ENCODE measurements at regions of chr16 and their contacts with region 1.

Region 1: DNA sequence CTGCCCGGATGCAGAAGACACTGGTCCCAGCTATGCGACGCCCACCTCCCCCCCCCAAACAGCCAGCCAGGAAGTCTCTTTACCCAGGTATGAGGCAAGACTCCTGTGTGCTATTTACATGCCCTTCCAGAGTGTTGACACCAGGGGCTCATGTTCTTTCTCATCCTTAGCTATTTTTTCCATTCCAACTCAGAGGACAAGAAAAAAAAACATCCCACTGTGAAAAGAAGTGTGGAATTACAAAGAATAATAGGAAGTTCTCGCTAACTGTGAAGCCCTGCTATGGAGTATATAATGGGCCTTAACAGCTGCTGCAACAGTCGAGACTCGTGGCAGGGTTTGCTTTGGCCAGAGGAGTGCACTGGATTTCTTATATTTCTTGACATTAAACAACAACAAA is 584.9 kb downstream of the CDH13 start:
- DNase-seq: no peak
- H3K4me3 ChIP-seq: no peak overlapping the region
- H3K27ac ChIP-seq: no peak overlapping the region
- H3K4me1 ChIP-seq: no peaks in the 10 kb centered on the region
- H3K27me3 ChIP-seq: no peaks in the 10 kb centered on the region

Region 2: GRCh38 chr16:83113317-83113716 is 98.4 kb before region 1 on chr16:
- CTCF ChIA-PET with region 1: interaction called, 10 read pairs
- POLR2A ChIA-PET with region 1: no interaction called
- DNase-seq: peak; percentile 50 to 58 (median 51)
- H3K4me3 ChIP-seq: no peak overlapping the region
- H3K27ac ChIP-seq: no peak overlapping the region
- H3K4me1 ChIP-seq: peaks cover 0 to 26% (median 0%) of the 10 kb centered on the region in 4 experiments
- H3K27me3 ChIP-seq: no peaks in the 10 kb centered on the region

Region 3: GRCh38 chr16:83441517-83441916 is 229.8 kb after region 1 on chr16:
- CTCF ChIA-PET with region 1: no interaction called
- POLR2A ChIA-PET with region 1: no interaction called
- DNase-seq: no peak
- H3K4me3 ChIP-seq: no peak overlapping the region
- H3K27ac ChIP-seq: no peak overlapping the region
- H3K4me1 ChIP-seq: no peaks in the 10 kb centered on the region
- H3K27me3 ChIP-seq: peaks cover 0 to 11% (median 0%) of the 10 kb centered on the region in 5 experiments

Measured in common myeloid progenitor, CD34-positive (primary cell).